PC-9 (cell line): ENCODE measurements at regions of chr1 and their contacts with region 1.

Region 1: DNA sequence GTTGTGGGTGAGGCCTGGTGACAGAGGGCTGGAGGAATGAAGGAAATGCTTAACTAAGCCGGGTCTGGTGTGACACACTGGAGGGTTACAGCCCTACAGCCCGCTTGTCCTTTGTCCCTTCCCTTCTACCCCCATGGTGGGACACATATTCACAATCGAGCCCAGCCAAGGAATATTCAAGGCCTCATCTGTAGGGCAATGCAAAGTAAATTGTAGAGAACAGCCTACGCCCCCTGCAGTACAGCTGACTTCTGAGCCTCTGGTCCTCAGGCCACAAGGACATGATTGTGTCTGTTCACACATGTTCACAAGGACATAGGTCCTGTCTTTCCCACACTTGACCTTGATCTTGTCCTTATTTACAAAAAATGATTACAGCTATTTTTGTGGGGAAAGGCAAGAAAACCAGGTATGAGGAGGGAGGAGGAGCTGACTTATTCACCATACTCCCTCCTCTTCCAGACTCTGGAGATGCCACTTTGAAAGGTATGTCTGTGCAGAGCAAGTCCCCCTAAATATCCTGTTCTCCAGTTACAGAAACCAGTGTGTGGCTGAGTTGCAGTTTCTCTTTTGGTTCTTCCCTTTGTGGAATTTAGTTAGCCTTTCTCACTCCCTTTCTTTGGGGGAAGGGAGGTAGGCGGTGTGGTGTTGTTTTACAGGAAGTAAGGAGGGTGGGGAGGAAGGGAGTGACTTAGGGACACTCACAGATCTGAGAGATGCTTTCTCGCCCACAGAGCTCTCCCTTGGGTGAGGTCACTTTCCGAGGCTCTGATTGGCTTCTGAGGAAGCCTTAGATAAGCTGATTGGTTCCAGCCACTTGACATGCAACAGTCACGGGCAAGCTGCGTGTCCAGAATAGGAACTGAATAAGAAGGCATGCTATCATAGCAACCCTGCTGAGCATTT is 14.6 kb downstream of the POLR3GL start:
- DNase-seq: peak; percentile 86 to 100
- H3K4me3 ChIP-seq: peak overlapping the region; percentile 55
- H3K27ac ChIP-seq: peak overlapping the region; percentile 100
- H3K4me1 ChIP-seq: peaks cover 49% of the 10 kb centered on the region
- H3K27me3 ChIP-seq: no peaks in the 10 kb centered on the region
- CTCF ChIP-seq: no peak; the same call in 1 of the 2 replicates

Region 2: DNA sequence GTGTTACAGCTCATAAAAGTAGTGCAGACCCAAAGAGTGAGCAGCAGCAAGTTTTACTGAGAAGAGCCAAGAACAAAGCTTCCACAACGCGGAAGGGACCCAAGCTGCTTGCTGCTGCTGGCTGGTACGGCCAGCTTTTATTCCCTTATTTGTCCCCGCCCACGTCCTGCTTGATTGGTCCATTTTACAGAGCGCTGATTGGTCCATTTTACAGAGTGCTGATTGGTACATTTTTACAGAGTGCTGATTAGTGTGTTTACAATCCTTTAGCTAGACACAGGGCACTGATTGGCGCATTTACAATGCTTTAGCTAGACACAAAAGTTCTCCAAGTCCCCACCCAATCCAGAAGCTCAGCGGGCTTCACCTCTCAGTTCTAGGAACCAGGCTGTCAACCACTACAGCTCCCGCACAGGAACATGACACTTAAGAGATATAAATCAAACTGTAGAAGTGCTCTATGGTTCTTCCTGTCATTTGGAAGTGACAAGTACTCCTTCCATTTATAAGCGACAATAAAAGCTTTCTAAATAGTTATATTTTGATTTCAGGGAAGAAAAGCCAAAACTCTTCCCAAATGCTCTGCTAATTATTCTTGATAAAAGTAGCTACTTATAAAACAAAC is 183.7 kb before region 1 on chr1:
- CTCF ChIA-PET with region 1: no interaction called
- POLR2A ChIA-PET with region 1: no interaction called
- intact Hi-C with region 1: no loop called
- DNase-seq: no peak
- H3K4me3 ChIP-seq: no peak overlapping the region
- H3K27ac ChIP-seq: no peak overlapping the region
- H3K4me1 ChIP-seq: no peaks in the 10 kb centered on the region
- H3K27me3 ChIP-seq: no peaks in the 10 kb centered on the region
- CTCF ChIP-seq: no peak

Region 3: DNA sequence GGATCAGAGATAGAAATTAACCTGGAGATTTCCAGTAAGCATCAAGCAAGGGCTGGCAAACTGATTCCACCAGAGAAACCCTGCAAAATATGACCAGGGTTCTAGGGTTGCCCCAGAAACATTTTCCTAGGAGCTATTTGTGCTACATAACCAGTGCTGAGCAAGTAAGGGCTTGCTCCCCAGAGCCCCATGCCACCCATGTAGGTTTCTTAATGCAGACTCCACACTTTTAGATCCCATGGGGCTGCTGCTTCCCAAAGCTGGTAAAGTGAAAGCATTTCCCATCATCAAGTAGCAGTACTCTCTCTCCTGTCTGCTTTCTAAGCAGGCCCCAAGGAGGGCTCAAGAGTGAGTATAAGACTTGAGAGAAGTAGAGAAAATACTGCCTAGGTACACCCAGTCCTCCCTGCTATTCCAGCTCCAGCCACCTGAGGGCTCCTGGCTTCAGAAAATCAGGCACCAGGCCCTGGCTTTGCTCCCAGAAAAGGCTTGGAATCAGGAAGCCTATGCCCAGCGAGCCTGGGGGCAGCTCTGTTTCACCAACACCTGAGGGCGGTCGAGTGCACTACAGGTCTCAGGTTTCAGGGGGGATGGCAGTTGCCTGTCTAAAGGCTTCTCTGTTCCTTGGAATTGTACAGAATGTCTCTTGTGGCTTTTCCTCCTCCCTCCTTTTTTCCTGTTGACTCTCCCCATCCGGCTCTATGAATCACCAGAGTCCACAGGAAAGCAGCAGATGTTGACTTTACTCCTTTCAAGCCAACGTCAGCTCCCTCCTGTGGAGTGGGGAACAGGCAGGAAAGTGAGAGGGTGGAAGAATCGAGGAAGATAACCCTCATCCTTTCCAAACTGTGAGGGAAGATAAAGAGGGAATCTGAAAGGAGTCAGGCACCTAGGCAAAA is 87.3 kb before region 1 on chr1:
- CTCF ChIA-PET with region 1: interaction called, 5 read pairs
- POLR2A ChIA-PET with region 1: interaction called, 7 read pairs
- intact Hi-C with region 1: loop called (anchors 1 kb)
- DNase-seq: peak; percentile 97 to 99
- H3K4me3 ChIP-seq: peak overlapping the region; percentile 27; the same call in 1 of the 2 replicates
- H3K27ac ChIP-seq: peak overlapping the region; percentile 65
- H3K4me1 ChIP-seq: peaks cover 52% of the 10 kb centered on the region
- H3K27me3 ChIP-seq: no peaks in the 10 kb centered on the region
- CTCF ChIP-seq: peak; percentile 95

Region 4: DNA sequence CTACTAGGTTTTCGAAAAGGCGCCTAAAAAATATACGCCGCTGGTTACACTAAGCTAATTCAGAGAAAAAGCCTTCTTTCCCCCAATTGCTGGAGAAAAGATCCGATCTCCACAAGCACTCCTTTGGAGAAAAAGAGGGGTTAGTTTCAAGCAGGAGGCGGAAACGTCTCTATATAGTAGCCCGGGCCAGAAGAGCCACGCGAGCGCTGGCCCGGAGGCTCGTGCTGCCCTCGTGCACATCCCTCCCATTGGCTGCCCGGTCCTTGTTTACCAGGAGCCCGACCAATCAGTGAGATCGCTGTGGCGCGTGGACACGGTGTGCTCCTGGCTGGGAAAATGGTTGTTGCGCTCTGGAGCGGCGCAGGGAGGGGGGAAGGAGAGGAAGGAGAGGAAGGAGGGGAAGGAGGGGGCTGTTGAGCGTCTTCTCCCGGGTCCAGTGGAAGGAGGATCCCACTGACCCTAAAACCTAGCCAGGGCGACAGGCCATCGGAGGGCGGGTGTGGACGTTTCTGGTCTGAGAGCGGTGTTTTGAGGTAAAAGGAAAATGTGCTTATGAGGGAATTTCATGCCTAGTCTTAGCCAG is 17.4 kb after region 1 on chr1 and contains the start of gene TXNIP:
- CTCF ChIA-PET with region 1: interaction called, 7 read pairs
- POLR2A ChIA-PET with region 1: interaction called, 3 read pairs
- intact Hi-C with region 1: loop called (anchors 1 kb)
- DNase-seq: peak; percentile 93
- H3K4me3 ChIP-seq: peak within 1 kb of the TSS; percentile 93
- H3K27ac ChIP-seq: peak within 1 kb of the TSS; percentile 78
- H3K4me1 ChIP-seq: peaks cover 67% of the 10 kb centered on the region
- H3K27me3 ChIP-seq: no peaks in the 10 kb centered on the region
- CTCF ChIP-seq: no peak
- total RNA-seq, gene TXNIP: 95.7 and 131 TPM in 2 replicates

Region 5: GRCh38 chr1:146012737-146013403 is 33.8 kb after region 1 on chr1:
- CTCF ChIA-PET with region 1: interaction called, 24 read pairs
- POLR2A ChIA-PET with region 1: interaction called, 20 read pairs
- intact Hi-C with region 1: no loop called
- DNase-seq: peak; percentile 43 to 80
- H3K4me3 ChIP-seq: no peak overlapping the region
- H3K27ac ChIP-seq: no peak overlapping the region
- H3K4me1 ChIP-seq: no peaks in the 10 kb centered on the region; the same call in 1 of the 2 replicates
- H3K27me3 ChIP-seq: no peaks in the 10 kb centered on the region
- CTCF ChIP-seq: peak; percentile 82

Region 6: GRCh38 chr1:146049436-146049835 is 70.3 kb after region 1 on chr1:
- CTCF ChIA-PET with region 1: no interaction called
- POLR2A ChIA-PET with region 1: no interaction called
- intact Hi-C with region 1: no loop called
- DNase-seq: no peak
- H3K4me3 ChIP-seq: no peak overlapping the region
- H3K27ac ChIP-seq: no peak overlapping the region
- H3K4me1 ChIP-seq: peaks cover 8% of the 10 kb centered on the region; the same call in 1 of the 2 replicates
- H3K27me3 ChIP-seq: no peaks in the 10 kb centered on the region
- CTCF ChIP-seq: no peak